Activated CD4-positive, alpha-beta memory T cell treated with anti-CD3 and anti-CD28 coated beads, Interleukin-2, amount 10 ng/mL, durations not matched to agents 7 days and 5 days (primary cell): ENCODE measurements at regions of chr11 and their contacts with region 1.

Region 1: GRCh38 chr11:65888163-65888814 is at the start of gene FIBP:
- DNase-seq: peak; percentile 98
- H3K4me3 Mint-ChIP-seq: peak within 1 kb of the TSS; percentile 97
- H3K27ac Mint-ChIP-seq: peak within 1 kb of the TSS; percentile 90
- H3K4me1 Mint-ChIP-seq: peaks cover 74% of the 10 kb centered on the region
- H3K27me3 Mint-ChIP-seq: no peaks in the 10 kb centered on the region
- total RNA-seq, gene FIBP: 71.7 to 77.4 TPM

Region 2: GRCh38 chr11:65637794-65638317 is 250.4 kb before region 1 on chr11 and contains the start of gene SIPA1:
- CTCF ChIA-PET with region 1: interaction called, 3 read pairs
- POLR2A ChIA-PET with region 1: interaction called, 10 read pairs
- DNase-seq: peak; percentile 69
- H3K4me3 Mint-ChIP-seq: peak within 1 kb of the TSS; percentile 95
- H3K27ac Mint-ChIP-seq: peak within 1 kb of the TSS; percentile 97
- H3K4me1 Mint-ChIP-seq: peaks cover 64% of the 10 kb centered on the region
- H3K27me3 Mint-ChIP-seq: no peaks in the 10 kb centered on the region
- total RNA-seq, gene SIPA1: 201 to 205 TPM

Region 3: GRCh38 chr11:65868076-65868667 is 20.1 kb before region 1 on chr11:
- CTCF ChIA-PET with region 1: interaction called, 251 read pairs
- POLR2A ChIA-PET with region 1: interaction called, 284 read pairs
- DNase-seq: no peak
- H3K4me3 Mint-ChIP-seq: no peak overlapping the region
- H3K27ac Mint-ChIP-seq: no peak overlapping the region
- H3K4me1 Mint-ChIP-seq: peaks cover 34% of the 10 kb centered on the region
- H3K27me3 Mint-ChIP-seq: peaks cover 7% of the 10 kb centered on the region

Region 4: GRCh38 chr11:65906602-65907001 is 18.3 kb after region 1 on chr11:
- CTCF ChIA-PET with region 1: interaction called, 56 read pairs
- POLR2A ChIA-PET with region 1: interaction called, 185 read pairs
- DNase-seq: no peak
- H3K4me3 Mint-ChIP-seq: no peak overlapping the region
- H3K27ac Mint-ChIP-seq: no peak overlapping the region
- H3K4me1 Mint-ChIP-seq: peaks cover 21% of the 10 kb centered on the region
- H3K27me3 Mint-ChIP-seq: peaks cover 12% of the 10 kb centered on the region

Region 5: DNA sequence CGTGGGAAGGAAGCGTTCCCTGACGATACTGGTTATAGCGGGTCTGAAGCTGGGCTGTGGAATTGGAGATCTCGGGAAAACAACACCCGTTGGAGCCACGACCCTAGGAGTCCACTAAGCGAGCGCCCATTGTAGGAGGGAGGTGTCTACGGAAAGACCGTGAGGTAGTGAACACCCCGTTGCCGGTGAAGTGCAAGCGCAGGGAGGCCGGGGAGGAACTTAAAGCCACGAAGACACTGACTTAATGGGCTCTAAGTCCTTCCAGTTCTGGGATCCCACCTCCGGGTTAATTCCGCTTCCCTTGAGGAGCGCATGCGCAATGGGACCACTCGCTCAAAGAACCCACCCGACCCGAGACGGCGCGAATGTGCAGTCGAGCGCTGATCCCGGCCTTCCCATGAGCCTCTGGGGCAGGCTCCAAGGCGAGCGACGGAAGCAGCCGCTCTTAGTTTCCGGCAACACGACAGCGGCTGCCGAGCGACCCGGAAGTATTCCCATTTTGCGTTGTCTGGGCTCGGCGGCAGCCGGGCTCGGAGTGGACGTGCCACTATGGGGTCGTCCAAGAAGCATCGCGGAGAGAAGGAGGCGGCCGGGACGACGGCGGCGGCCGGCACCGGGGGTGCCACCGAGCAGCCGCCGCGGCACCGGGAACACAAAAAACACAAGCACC is 73.1 kb after region 1 on chr11 and contains the start of gene SART1:
- CTCF ChIA-PET with region 1: interaction called, 26 read pairs
- POLR2A ChIA-PET with region 1: interaction called, 80 read pairs
- DNase-seq: peak; percentile 96
- H3K4me3 Mint-ChIP-seq: peak within 1 kb of the TSS; percentile 98
- H3K27ac Mint-ChIP-seq: peak within 1 kb of the TSS; percentile 96
- H3K4me1 Mint-ChIP-seq: peaks cover 52% of the 10 kb centered on the region
- H3K27me3 Mint-ChIP-seq: no peaks in the 10 kb centered on the region
- total RNA-seq, gene SART1: 59.5 to 61.5 TPM

Region 6: GRCh38 chr11:66001942-66002647 is 113.8 kb after region 1 on chr11 and contains the starts of genes BANF1 and EIF1AD:
- CTCF ChIA-PET with region 1: interaction called, 6 read pairs
- POLR2A ChIA-PET with region 1: interaction called, 22 read pairs
- DNase-seq: peak; percentile 96
- H3K4me3 Mint-ChIP-seq: peak within 1 kb of the TSS; percentile 94
- H3K27ac Mint-ChIP-seq: peak within 1 kb of the TSS; percentile 95
- H3K4me1 Mint-ChIP-seq: peaks cover 48% of the 10 kb centered on the region
- H3K27me3 Mint-ChIP-seq: no peaks in the 10 kb centered on the region
- total RNA-seq, gene BANF1: 191 to 196 TPM
- total RNA-seq, gene EIF1AD: 43.6 to 45.9 TPM